ENCODE measurements at regions of chr3 and their contacts with region 1.

Region 1: GRCh38 chr3:16884084-16884747 is 539 bp upstream of the PLCL2 start:
- DNase-seq: peak; percentile 85
- ATAC-seq: peak; percentile 77

Region 2: GRCh38 chr3:16550676-16551341 is 333.4 kb before region 1 on chr3:
- intact Hi-C with region 1: no loop called
- DNase-seq: no peak
- ATAC-seq: peak; percentile 82

Region 3: GRCh38 chr3:16741890-16742289 is 142.3 kb before region 1 on chr3:
- intact Hi-C with region 1: loop called (anchors 2 kb)
- DNase-seq: no peak
- ATAC-seq: peak; percentile 99

Region 4: GRCh38 chr3:16838561-16838960 is 45.7 kb before region 1 on chr3:
- intact Hi-C with region 1: loop called (anchors 2 kb)
- DNase-seq: no peak
- ATAC-seq: peak; percentile 55

Region 5: DNA sequence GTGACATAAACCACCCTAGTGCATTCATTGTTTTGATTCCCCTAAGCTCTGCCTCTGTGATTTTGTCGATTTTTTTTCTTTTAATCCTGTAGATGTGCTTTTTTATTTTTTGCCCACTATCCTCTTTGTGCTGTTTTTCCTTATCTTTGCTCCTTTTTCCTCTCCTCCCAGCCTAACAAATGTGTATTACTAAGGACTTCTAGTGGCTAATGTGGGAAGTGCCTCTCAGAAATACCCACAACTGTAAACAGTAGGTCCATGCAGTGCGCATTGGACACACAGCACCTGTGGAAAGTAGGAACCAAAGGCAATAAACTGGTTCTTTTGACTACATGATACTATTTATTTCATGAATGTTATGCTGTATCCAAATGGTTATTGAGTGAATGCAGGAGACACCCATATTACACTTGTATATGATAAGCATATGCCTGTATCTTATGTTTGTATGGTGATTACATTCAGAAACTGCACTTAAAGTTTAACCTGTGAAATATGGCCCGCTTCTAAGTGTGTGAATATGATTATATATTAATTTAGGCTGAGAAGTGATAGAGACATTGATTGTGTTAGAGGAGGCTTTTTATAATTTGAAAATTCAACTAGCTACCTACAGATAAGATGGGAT is 148.3 kb after region 1 on chr3:
- intact Hi-C with region 1: loop called (anchors 5 kb)
- DNase-seq: no peak
- ATAC-seq: peak; percentile 50